A549 (cell line): ENCODE measurements at regions of chr17 and their contacts with region 1.

Region 1: DNA sequence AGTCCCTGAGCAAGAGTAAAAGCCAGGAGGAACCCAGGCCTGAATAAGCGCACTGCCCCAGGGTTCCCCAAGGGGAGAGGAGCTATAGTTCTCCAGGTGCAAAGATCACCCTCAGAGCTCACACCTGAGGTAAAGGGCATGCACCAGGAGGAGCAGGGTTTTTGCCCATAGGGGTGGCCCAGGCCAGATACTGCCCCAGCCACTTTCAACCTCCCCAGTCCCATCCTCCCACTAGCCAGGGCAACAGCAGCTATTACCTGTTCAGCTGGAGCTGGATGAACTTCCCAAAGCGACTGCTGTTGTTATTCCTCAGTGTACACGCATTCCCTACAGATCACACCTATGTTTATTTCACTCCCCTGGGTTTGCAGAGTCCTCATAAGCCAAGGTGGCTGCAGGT is 19.8 kb downstream of the MYO19 start:
- DNase-seq: no peak
- ATAC-seq: no peak; a peak in 1 of 6 replicates
- H3K4me3 ChIP-seq: no peak overlapping the region
- H3K27ac ChIP-seq: no peak overlapping the region
- H3K4me1 ChIP-seq: no peaks in the 10 kb centered on the region
- CTCF ChIP-seq: no peak
- EP300 ChIP-seq: no peak
- POLR2A ChIP-seq: no peak
- RAD21 ChIP-seq: no peak

Region 2: GRCh38 chr17:36214918-36215317 is 299.9 kb before region 1 on chr17:
- CTCF ChIA-PET with region 1: no interaction called
- POLR2A ChIA-PET with region 1: no interaction called
- DNase-seq: no peak
- ATAC-seq: no peak
- H3K4me3 ChIP-seq: no peak overlapping the region
- H3K27ac ChIP-seq: no peak overlapping the region
- H3K4me1 ChIP-seq: no peaks in the 10 kb centered on the region
- CTCF ChIP-seq: no peak
- EP300 ChIP-seq: no peak
- POLR2A ChIP-seq: no peak
- RAD21 ChIP-seq: no peak

Region 3: GRCh38 chr17:36503456-36504155 is 11.2 kb before region 1 on chr17:
- CTCF ChIA-PET with region 1: interaction called, 16 read pairs
- POLR2A ChIA-PET with region 1: no interaction called
- DNase-seq: no peak
- ATAC-seq: 0 out of 6 replicates have a peak, but pooled peaks of 1 of the 2 experiments have one; percentile 4
- H3K4me3 ChIP-seq: no peak overlapping the region
- H3K27ac ChIP-seq: no peak overlapping the region
- H3K4me1 ChIP-seq: no peaks in the 10 kb centered on the region; the same call in 2 of the 3 replicates
- CTCF ChIP-seq: no peak
- EP300 ChIP-seq: no peak
- POLR2A ChIP-seq: no peak
- RAD21 ChIP-seq: no peak